ENCODE measurements at regions of chr5 and their contacts with region 1.

Region 1: DNA sequence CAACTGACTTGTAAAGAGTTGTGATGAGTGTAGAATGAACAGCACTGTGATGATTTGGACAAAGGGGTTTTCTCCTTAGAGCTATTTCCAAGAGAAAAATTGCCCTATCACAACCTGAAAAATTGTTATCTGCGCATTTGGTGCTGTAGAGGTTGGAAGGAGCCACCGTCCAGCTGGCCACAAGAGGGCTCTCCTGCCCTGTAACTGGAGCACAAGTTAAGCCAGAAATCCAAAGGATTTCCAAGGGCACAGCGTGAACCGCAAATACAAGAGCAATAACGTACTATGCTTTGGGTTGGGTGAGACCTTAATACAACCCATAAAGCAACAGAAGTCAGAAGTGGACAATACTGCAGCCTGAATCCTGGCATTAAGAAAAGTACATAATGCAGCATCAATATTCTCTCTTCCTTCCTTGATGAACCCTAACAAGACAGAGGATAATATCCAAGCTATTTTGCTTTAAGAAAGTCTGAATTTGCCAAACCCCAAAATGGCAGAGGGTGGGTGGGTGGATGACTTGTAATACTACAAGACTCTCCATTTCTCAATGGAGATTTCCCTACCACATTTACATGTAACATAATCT is 56.8 kb upstream of the SMIM32 start:
- DNase-seq: no peak

Region 2: GRCh38 chr5:136108180-136108611 is 141.6 kb before region 1 on chr5:
- intact Hi-C with region 1: no loop called
- DNase-seq: no peak

Region 3: DNA sequence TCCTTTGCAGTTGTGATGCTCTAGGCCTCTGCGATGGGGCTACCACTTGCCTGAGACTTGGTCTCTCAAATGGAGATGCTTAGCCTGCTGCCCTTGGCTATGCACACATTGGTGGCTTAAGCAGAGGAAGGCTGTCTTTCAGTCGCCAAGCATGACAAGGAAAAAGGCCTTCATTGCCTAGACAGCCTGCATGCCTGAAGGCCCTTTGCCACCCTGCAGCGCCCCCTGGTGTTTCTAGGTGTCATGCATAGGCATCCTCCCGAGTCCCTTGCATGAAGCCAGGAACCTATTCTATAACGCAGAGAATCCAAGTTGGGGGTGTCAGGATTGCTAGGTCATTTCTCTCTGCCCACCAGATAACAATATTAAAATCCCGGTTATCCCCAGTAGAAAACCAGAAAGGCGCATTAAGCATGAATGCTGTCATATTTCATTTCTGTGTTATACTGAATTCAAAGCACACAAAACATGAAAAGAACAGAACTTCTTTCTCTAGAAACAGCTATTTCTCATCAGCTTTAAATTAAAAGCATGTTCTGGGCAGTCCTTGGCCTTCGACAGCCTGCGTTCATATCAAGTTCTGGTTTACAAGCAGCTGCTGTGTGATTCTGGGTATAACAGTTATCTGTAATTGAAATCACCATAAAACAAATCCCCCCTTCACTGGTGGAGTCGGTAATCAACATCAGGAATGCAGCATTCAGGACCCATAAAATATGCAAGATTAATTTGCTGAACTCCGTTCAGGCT is 175.2 kb after region 1 on chr5:
- intact Hi-C with region 1: loop called (anchors 10 kb)
- DNase-seq: no peak

Region 4: DNA sequence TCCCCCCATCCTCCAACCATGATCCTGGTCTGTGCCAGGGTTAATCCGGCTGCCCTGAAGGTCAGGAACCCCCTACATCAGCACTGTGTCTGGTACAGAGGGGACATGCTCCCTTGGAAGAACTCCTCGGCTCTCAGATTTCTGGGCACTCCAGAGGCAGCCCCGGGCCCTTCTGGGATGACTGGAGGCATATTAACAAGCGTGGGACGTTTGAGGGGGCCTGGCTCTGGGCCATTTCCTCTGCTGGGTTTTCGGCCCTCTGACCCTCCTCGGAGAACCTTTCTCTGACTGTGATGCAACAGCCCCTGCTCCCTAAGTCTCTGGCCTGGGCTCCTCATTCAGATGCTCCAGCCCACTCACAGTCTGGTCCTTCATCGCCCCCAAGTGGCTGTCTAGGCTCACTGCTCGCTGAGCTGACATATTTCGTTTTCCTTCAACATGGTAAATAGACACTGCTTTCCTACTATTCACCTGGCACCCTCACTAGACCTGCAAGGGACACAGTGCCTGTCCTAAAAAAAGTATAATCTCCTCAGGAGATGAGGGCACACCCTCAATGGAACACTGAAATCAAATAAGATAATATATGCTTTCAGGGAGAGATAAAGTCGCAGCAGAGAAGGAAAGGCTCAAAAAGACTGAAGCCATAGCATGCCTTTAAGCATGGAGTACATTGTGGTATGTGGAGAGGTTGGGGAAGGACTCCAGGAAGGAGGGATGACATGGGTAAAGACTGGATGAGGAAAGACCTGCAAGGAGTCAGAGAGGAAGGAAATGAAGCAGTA is 520.3 kb after region 1 on chr5:
- intact Hi-C with region 1: loop called (anchors 2 kb)
- DNase-seq: no peak

Measured in cardiac septum (tissue), 1 donor.